ENCODE measurements at regions of chr15 and their contacts with region 1.

Region 1: DNA sequence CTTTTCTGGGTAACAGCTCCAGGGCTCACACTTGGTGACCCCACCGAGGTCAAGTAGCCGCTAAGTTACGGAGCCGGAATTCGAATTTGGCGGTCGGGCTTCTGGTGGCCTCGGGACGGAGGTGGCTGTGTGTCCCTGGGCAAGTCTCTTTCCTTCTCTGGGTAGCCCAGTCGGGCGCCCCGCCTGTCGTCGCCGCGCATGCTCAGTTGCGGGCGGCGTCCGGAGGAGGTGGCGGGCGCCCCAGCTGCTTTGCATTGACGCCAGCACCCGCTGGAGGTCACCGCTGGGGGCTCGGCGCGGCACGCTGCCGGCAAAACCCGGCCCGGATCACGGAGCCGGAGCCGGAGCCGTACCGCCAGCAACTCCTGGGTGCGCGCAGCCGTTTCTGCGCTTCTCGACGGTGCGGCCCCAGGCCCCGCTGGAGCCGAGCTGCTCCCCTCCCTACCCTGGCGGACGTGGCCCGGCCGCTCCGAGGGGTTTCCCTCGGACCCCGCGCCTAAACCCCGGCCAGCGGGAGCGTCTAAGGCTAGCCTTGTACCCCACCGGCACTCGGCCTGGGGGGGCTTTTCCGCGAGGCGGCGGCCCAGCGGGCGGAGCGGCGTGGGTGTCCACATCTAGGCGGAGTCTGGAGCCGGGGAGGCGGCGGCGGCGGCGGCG is 474 bp upstream of the PDE8A start:
- DNase-seq: peak; percentile 97
- H3K4me3 ChIP-seq: peak overlapping the region; percentile 74 to 92 (median 83)
- H3K27ac ChIP-seq: peak overlapping the region; percentile 85 to 98 (median 94)
- H3K4me1 ChIP-seq: peaks cover 8 to 47% (median 30%) of the 10 kb centered on the region in 4 donors
- H3K27me3 ChIP-seq: no peaks in the 10 kb centered on the region
- CTCF ChIP-seq: peak in 3 of 4 experiments; percentile 16 to 64 (median 29)
- EP300 ChIP-seq: peak in 2 of 4 donors; percentile 29 to 59
- POLR2A ChIP-seq: peak in 1 of 2 donors; percentile 11

Region 2: DNA sequence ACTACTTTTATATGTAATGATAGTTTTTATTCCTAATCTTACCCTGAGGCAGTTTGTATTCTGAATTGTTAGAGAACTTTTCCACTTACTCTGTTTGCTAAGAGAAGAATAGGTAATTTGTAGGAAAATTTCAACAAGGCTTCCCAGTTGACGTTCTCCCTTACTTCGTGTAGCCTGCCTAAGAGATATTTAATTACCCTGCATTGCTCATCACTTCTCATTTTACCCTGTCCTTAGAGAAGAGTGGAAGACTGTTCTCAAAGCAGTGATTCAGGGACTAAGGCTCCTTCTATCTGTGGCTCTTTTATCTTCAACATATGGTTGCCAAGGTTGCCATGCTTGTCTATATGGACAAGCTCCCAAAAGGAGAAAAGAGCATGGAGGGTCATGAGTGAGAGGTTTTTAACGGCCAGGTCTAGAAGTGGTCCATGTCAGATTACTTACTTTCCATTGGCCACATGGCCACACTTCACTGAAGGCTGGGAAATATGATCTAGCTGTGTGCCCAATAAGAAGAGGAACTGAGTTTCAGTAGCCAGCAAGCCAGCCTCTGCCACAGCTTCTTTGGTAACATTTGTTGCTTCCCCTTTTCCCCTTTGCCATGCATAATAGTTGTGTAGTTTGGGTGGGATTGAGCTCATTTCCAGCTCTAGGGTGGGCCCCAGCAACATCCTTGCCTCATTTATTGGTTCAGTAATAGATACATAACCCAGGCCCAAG is 22.6 kb after region 1 on chr15:
- intact Hi-C with region 1: loop called (anchors 2 kb)
- DNase-seq: no peak
- H3K4me3 ChIP-seq: no peak overlapping the region
- H3K27ac ChIP-seq: no peak overlapping the region
- H3K4me1 ChIP-seq: peaks cover 0 to 45% (median 34%) of the 10 kb centered on the region in 4 donors
- H3K27me3 ChIP-seq: no peaks in the 10 kb centered on the region
- CTCF ChIP-seq: no peak
- EP300 ChIP-seq: no peak
- POLR2A ChIP-seq: no peak

Region 3: DNA sequence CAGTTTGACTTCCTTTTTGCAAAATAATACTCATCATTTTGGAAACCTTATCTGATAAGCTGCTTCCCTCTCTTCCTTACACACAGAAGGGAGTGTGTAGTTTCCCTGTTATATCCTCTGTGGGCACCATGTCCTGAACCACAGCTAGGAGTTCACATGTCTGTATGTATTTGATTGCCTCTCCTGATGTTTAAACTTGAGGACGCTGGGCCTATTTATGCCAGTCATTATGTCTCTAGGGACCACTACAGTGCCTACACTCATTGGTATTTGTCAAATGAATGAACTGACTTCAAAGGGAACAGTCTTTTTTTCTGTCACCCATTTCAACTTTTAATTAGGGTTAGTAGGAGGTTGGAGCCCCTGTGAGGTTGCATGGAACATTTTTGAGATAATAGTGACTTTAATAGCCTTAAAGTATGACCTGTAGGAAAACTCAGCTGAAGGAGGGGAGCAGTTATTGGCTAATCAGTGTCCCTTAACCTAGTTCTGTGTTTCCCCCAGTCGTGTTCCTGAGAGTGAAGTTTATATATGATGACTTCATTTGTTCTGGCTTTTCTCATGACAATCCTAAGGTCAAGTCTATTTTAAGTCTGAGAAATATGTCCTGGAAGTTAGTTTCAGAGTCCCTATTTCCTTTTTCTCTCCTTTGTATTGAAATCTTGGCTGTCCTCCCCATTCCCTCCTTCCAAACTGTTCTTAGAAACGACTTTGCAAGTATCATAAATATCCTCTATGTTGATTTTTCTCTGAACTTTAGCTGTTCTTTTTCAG is 29.4 kb after region 1 on chr15:
- intact Hi-C with region 1: loop called (anchors 2 kb)
- DNase-seq: no peak
- H3K4me3 ChIP-seq: no peak overlapping the region
- H3K27ac ChIP-seq: peak overlapping the region; percentile 67 to 72 (median 70)
- H3K4me1 ChIP-seq: peaks cover 0 to 57% (median 48%) of the 10 kb centered on the region in 4 donors
- H3K27me3 ChIP-seq: no peaks in the 10 kb centered on the region
- CTCF ChIP-seq: peak in 2 of 4 experiments; percentile 29 to 44
- EP300 ChIP-seq: peak in 1 of 4 donors; percentile 41
- POLR2A ChIP-seq: no peak

Region 4: DNA sequence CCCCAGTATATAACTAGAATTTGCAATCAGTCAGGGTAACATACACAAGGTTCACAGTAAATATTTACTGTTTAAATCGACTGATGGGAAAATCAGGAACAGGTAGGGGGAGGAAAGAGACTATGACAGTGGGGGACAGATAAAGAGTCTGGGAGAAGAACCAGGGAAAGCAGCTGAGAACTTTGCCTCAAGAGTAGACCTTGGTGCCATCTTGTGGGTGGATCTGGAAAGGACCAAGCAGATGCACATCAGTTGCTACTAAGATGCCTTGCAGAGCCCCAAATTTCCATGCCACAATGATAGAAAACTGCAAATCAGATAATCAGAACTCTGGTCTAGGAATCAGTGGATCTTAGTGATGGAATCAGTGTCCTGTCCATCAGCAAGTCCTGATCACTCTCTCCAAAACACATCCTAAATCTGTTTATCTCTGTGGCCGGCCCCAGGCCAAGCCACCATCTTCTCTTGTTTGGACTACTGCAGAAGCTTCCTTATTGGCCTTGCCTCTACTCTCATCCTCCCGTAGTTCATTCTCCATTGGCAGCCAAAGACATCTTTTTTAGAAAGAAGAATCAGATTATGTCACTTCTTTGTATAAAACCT is 63.2 kb after region 1 on chr15:
- intact Hi-C with region 1: loop called (anchors 1 kb)
- DNase-seq: peak; percentile 77
- H3K4me3 ChIP-seq: no peak overlapping the region
- H3K27ac ChIP-seq: peak overlapping the region in 1 of 4 donors; percentile 1
- H3K4me1 ChIP-seq: peaks cover 0 to 17% (median 6%) of the 10 kb centered on the region in 4 donors
- H3K27me3 ChIP-seq: no peaks in the 10 kb centered on the region
- CTCF ChIP-seq: peak; percentile 51 to 67 (median 60)
- EP300 ChIP-seq: no peak
- POLR2A ChIP-seq: no peak

Region 5: GRCh38 chr15:85125056-85125661 is 144.0 kb after region 1 on chr15:
- intact Hi-C with region 1: no loop called
- DNase-seq: no peak
- H3K4me3 ChIP-seq: no peak overlapping the region
- H3K27ac ChIP-seq: no peak overlapping the region
- H3K4me1 ChIP-seq: no peaks in the 10 kb centered on the region
- H3K27me3 ChIP-seq: no peaks in the 10 kb centered on the region
- CTCF ChIP-seq: no peak
- EP300 ChIP-seq: no peak
- POLR2A ChIP-seq: no peak